ENCODE measurements at regions of chr1 and their contacts with region 1.

Region 1: GRCh38 chr1:65717815-65718454 is 74.8 kb upstream of the PDE4B start:
- DNase-seq: peak; percentile 29
- H3K4me3 ChIP-seq: no peak overlapping the region
- CTCF ChIP-seq: peak; percentile 30

Region 2: GRCh38 chr1:65948609-65949229 is 230.8 kb after region 1 on chr1:
- CTCF ChIA-PET with region 1: interaction called, 40 read pairs
- POLR2A ChIA-PET with region 1: no interaction called
- DNase-seq: no peak
- H3K4me3 ChIP-seq: no peak overlapping the region
- CTCF ChIP-seq: peak; percentile 22

Region 3: DNA sequence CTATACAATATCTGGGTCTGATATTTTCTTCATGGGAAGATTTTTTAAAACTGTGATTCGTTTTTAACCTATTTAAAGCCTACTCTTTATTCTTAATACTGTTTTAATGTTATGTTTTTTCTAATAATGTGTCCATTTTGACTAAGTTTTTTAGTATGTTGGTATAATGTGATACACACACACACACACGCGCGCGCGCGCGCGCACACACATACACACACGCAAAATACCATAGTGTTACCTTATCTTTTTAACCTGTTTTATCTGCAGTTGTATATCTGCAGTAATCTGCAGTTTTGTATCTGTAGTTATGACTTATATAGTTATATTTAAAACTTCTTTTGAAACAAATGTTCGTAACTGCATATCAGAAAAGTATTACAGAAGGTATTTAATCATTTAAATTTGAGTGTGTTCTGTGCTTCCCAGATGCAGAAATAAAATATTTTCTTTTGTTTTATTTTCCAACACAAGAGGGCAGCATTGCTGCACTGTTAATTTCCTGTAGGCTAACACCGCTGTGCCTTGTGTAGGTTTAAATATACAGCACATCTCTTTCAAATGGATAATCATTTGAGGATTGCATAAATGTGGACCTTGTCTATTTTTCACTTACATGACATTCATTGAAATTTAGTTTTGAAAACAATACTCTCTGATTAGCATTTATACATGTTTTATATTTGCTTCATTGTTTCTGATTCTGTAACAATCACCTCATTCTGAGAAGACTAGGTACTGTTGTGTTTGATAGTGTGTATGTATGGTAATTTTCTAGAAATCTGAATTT is 240.8 kb after region 1 on chr1:
- CTCF ChIA-PET with region 1: interaction called, 10 read pairs
- POLR2A ChIA-PET with region 1: no interaction called
- DNase-seq: no peak
- H3K4me3 ChIP-seq: no peak overlapping the region
- CTCF ChIP-seq: peak; percentile 23